ENCODE measurements at regions of chr2 and their contacts with region 1.

Region 1: GRCh38 chr2:231612179-231613053 is 19.8 kb downstream of the TEX44 start:
- DNase-seq: peak; percentile 84
- ATAC-seq: peak; percentile 59
- H3K4me3 ChIP-seq: peak overlapping the region; percentile 38; the same call in 1 of the 2 replicates
- H3K27ac ChIP-seq: peak overlapping the region; percentile 91
- H3K4me1 ChIP-seq: peaks cover 37% of the 10 kb centered on the region
- H3K27me3 ChIP-seq: no peaks in the 10 kb centered on the region
- CTCF ChIP-seq: peak; percentile 93

Region 2: GRCh38 chr2:231642631-231643494 is 30.4 kb after region 1 on chr2:
- CTCF ChIA-PET with region 1: interaction called, 7 read pairs
- POLR2A ChIA-PET with region 1: interaction called, 6 read pairs
- intact Hi-C with region 1: loop called (anchors 1 kb)
- DNase-seq: peak; percentile 98
- ATAC-seq: peak; percentile 96
- H3K4me3 ChIP-seq: peak overlapping the region; percentile 66
- H3K27ac ChIP-seq: peak overlapping the region; percentile 97
- H3K4me1 ChIP-seq: peaks cover 17% of the 10 kb centered on the region
- H3K27me3 ChIP-seq: no peaks in the 10 kb centered on the region
- CTCF ChIP-seq: no peak

Region 3: DNA sequence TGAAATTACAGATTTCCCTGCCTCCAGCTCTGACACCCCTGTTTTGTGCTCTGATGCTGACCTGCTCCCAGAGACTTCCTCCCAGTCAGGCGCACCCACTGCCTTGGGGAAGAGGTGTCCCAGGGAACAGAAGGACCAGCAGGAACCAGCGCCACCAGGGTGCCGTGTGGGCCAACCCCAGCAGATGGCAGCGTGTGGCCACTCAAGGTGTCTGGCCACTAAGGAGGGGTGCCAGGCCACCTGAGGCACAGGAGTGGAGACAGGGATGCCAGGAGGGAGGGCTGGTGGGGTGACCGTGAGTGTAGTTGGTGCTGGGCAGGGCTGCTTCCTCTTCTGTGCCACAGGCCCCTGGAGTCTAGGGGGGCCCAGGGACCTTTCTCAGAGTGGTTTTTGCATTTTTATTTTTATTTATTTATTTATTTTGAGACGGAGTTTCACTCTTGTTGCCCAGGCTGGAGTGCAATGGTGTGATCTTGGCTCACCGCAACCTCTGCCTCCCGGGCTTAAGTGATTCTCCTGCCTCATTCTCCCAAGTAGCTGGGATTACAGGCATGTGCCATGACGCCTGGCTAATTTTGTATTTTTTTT is 36.3 kb after region 1 on chr2:
- CTCF ChIA-PET with region 1: interaction called, 7 read pairs
- POLR2A ChIA-PET with region 1: interaction called, 6 read pairs
- intact Hi-C with region 1: loop called (anchors 1 kb)
- DNase-seq: peak; percentile 80
- ATAC-seq: peak; percentile 100
- H3K4me3 ChIP-seq: no peak overlapping the region
- H3K27ac ChIP-seq: no peak overlapping the region
- H3K4me1 ChIP-seq: peaks cover under 1% of the 10 kb centered on the region; the same call in 1 of the 2 replicates
- H3K27me3 ChIP-seq: no peaks in the 10 kb centered on the region
- CTCF ChIP-seq: peak; percentile 85

Region 4: DNA sequence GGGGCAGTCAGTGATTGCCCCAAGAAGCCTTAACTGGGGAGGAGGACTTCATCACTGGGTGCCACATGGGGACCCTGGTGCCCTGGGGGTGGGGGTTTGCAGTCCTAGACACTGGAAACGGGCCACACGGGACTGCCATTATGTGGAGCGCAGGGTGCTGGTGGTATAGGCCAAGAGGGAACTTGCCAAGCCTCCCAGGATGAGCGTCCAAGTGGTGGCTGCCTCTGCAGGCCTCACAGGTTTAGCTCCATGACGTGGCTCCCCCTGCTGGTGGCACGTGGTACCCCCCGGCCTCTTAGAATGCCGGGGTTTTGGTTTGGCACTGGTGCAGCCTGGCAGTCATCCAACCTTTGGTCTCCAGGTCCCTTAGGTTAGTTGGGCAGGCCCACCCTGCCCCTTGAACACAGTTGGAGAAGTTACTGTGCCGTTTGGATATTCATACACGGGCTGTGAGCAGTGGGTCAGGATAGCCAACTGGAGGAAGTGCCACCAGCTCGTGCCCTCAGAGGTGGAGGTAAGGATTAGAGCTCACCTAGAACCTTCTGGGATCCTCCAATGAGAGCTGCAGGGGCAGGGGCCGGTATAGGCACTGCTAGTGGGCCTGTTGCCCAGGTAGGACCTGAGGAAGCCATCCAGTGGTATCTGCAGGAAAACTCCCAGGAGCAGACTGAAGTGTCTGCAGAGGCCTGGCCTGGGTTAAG is 101.5 kb after region 1 on chr2:
- CTCF ChIA-PET with region 1: interaction called, 9 read pairs
- POLR2A ChIA-PET with region 1: no interaction called
- intact Hi-C with region 1: loop called (anchors 1 kb)
- DNase-seq: peak; percentile 92
- ATAC-seq: peak; percentile 44
- H3K4me3 ChIP-seq: no peak overlapping the region
- H3K27ac ChIP-seq: no peak overlapping the region
- H3K4me1 ChIP-seq: peaks cover 30% of the 10 kb centered on the region
- H3K27me3 ChIP-seq: no peaks in the 10 kb centered on the region
- CTCF ChIP-seq: peak; percentile 90

Region 5: DNA sequence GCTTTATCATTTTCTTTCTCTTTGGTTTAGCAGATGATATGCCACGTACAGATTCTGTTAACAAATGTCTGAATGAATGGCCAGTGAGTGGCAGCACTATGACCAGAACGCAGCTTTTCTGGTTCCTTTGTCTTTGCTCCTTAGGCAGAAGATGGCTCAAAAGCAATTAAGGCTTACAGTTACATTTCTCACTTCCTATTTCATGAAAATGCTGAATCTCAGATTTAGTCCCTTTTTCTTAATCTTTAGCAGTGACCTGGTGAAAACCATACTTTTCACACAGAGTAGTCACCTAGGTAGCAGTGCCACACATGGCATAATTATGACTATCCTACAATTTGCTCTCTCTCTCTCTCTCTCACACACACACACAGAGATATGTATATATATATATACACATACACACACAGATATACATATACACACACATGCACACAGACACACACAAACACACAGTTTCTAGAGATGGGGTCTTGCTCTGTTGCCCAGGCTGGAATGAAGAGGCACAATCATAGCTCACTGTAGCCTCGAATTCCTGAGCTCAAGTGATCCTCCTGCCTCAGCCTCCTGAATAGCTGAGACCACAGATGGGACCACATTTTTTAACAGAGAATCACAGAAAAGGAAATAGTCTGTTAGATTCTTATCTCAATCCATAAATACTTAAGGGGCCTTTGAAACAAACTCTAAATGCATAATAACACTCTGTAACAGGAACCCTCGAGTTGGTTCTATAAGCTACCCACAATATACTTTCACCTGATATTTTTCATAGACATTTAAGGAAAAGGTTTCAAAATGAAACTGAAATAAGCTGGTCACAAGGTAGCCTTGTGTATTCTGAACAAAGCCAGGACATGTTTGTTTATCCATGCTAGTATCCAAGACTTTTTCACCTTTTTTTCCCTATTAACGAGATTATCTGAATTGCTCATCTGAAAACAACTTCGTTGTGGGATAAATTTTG is 157.0 kb after region 1 on chr2:
- CTCF ChIA-PET with region 1: no interaction called
- POLR2A ChIA-PET with region 1: no interaction called
- intact Hi-C with region 1: no loop called
- DNase-seq: no peak
- ATAC-seq: no peak
- H3K4me3 ChIP-seq: no peak overlapping the region
- H3K27ac ChIP-seq: no peak overlapping the region
- H3K4me1 ChIP-seq: no peaks in the 10 kb centered on the region
- H3K27me3 ChIP-seq: no peaks in the 10 kb centered on the region
- CTCF ChIP-seq: no peak